Activated naive CD4-positive, alpha-beta T cell treated with anti-CD3 and anti-CD28 coated beads for 36 hours (primary cell): ENCODE measurements at regions of chr4 and their contacts with region 1.

Region 1: DNA sequence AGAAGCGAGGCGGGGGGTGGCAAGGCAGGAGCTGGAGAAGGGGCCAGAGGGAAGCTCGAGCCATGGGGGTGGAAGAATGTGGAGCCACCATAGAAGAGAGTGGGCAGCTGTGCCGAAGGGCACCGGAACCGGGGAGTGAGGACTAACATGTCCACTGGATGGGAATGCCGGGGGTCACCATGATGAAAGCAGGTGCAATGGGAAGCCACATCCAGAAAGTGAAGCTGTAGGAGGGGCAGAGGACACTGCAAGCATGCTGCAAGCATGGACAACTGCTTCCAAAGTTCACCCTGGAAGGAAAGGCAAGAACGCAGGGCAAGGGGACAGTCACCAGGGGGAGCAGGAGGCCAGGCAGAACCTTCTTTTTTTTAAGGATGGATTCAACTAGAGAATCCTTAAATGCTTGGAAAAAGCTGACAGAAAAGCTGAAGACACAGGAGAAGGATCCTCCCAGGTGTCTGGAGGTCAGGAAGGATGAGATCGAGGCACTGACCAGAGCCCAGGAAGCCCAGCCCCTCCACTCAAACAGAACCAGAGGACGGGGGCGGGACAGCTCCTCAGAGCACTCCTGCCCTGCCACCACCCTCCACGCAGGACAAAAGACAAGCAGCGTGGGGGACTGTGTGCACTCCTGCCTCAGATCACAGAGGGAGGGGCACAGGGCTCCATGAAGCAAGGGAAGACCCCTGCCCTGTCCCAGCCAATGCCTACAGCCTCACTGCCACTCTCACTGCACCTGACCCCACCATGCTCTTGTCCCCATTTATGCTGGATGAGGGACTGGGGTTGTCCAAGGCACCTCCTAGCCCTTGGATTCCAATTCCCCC is 169.2 kb downstream of the AFAP1 start:
- DNase-seq: peak; percentile 45
- H3K4me3 Mint-ChIP-seq: no peak overlapping the region
- H3K27ac Mint-ChIP-seq: peak overlapping the region; percentile 68
- H3K4me1 Mint-ChIP-seq: peaks cover 30% of the 10 kb centered on the region
- H3K27me3 Mint-ChIP-seq: no peaks in the 10 kb centered on the region

Region 2: GRCh38 chr4:7781366-7781765 is 10.9 kb after region 1 on chr4:
- CTCF ChIA-PET with region 1: interaction called, 12 read pairs
- intact Hi-C with region 1: no loop called
- DNase-seq: peak; percentile 44
- H3K4me3 Mint-ChIP-seq: peak overlapping the region; percentile 43
- H3K27ac Mint-ChIP-seq: peak overlapping the region; percentile 88
- H3K4me1 Mint-ChIP-seq: peaks cover 62% of the 10 kb centered on the region
- H3K27me3 Mint-ChIP-seq: no peaks in the 10 kb centered on the region

Region 3: GRCh38 chr4:7890635-7891393 is 120.4 kb after region 1 on chr4:
- CTCF ChIA-PET with region 1: no interaction called
- intact Hi-C with region 1: no loop called
- DNase-seq: no peak
- H3K4me3 Mint-ChIP-seq: no peak overlapping the region
- H3K27ac Mint-ChIP-seq: no peak overlapping the region
- H3K4me1 Mint-ChIP-seq: peaks cover 30% of the 10 kb centered on the region
- H3K27me3 Mint-ChIP-seq: no peaks in the 10 kb centered on the region